HEK293 (cell line): ENCODE measurements at regions of chr22 and their contacts with region 1.

Region 1: GRCh38 chr22:21938071-21938822 is 14.4 kb downstream of the PPM1F start:
- H3K4me3 ChIP-seq: peak overlapping the region; percentile 51
- H3K27ac ChIP-seq: peak overlapping the region; percentile 42
- H3K4me1 ChIP-seq: no peaks in the 10 kb centered on the region
- CTCF ChIP-seq: peak; percentile 99

Region 2: DNA sequence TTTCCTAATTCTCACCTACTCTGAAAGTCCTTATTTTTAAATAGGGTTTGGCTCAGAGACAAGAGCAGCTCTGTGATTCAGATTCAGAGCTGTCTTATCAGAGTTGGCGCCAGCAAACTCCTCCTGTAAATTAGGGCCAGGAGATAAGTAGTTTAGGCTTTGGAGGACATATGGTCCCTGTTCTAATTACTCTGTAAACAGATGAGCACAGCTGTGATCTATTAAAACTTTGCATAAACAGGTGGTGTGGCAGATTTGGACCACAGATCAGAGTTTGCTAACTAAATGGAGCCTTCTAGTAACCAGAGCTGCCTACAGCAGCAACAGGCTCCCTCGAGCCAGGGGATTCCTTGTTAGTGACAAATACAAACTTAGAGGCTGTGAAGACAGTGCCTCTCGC is 230.6 kb before region 1 on chr22:
- CTCF ChIA-PET with region 1: interaction called, 28 read pairs
- POLR2A ChIA-PET with region 1: interaction called, 6 read pairs
- H3K4me3 ChIP-seq: no peak overlapping the region
- H3K27ac ChIP-seq: no peak overlapping the region
- H3K4me1 ChIP-seq: no peaks in the 10 kb centered on the region
- CTCF ChIP-seq: no peak

Region 3: DNA sequence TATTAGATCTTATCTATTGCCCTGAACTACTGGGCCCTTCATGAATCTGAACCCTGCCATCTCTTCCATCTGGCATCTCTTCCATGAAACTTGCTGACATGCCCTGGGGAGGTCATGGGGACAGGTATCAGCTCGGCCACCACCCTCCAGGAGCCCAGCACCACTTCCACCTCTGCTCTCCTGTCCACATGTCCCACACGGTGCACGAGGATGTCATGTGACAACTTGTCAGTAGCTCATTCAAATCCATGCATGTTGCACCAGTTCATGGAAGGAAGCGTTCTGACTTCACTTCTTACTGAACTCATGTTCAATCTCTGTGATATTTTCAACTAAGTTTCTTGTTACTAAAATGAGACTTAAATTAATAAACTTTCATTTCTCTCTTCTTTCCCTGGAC is 219.2 kb before region 1 on chr22:
- CTCF ChIA-PET with region 1: interaction called, 22 read pairs
- POLR2A ChIA-PET with region 1: no interaction called
- H3K4me3 ChIP-seq: no peak overlapping the region
- H3K27ac ChIP-seq: no peak overlapping the region
- H3K4me1 ChIP-seq: no peaks in the 10 kb centered on the region
- CTCF ChIP-seq: no peak

Region 4: GRCh38 chr22:21771631-21771976 is 166.6 kb before region 1 on chr22:
- CTCF ChIA-PET with region 1: interaction called, 10 read pairs
- POLR2A ChIA-PET with region 1: no interaction called
- H3K4me3 ChIP-seq: no peak overlapping the region
- H3K27ac ChIP-seq: no peak overlapping the region
- H3K4me1 ChIP-seq: no peaks in the 10 kb centered on the region
- CTCF ChIP-seq: no peak

Region 5: DNA sequence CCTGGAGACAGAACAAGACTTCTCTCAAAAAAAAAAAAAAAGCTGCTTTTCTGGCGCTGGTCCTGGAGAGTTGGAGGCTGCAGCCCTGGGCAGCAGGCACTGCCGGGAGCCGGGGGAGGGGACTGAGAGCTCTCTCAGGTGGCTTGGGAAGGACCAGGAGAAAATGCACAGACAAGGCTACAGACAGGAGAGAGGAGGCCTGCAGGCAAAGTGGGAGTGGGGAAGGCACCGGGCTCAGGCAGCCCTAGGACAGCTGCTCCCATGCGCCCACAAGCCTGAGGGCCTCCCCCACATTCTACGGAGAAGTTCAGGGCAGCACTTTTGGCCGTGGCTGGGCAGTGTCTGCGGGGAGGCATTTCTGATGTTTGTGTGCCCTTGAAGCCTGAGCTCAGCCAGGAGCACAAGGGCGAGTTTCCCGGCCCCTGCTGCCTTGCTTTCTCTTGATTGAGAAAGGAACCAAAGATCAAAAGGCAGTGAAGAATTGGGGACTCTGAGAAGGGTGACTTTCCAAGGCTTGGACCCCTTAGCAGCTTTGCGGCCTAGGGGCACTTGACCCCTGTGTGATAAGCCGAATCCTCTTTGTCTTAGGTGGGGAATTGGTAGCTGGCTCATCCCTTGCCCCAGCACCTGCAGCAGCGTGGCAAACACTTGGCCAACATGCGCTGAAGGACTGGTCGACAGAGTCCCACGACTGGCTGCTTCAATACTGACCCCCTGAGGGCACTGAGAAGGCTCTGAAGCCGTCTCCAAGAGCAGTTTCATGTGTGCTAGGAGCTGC is 20.9 kb before region 1 on chr22:
- CTCF ChIA-PET with region 1: interaction called, 10 read pairs
- POLR2A ChIA-PET with region 1: no interaction called
- H3K4me3 ChIP-seq: no peak overlapping the region
- H3K27ac ChIP-seq: no peak overlapping the region
- H3K4me1 ChIP-seq: no peaks in the 10 kb centered on the region
- CTCF ChIP-seq: peak; percentile 30; the same call in 1 of the 2 replicates

Region 6: DNA sequence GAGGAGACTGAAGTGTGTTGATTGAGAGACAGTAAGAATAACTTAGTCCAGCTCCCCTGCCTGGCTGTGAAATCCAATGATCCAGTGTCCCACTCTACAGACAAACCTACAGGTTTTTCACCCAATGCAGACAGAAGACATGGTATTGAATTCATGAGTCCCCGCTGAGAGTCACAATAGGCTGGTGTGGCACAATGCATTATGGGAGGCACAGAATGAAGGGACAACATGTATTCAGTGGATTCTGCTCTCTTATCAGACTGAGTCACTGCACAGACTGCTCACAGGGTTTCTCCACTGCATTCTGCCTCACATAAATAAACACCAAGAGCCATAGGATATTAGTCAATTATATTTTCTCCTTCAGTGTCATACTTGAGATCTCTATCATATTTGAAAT is 99.5 kb after region 1 on chr22:
- CTCF ChIA-PET with region 1: no interaction called
- POLR2A ChIA-PET with region 1: no interaction called
- H3K4me3 ChIP-seq: no peak overlapping the region
- H3K27ac ChIP-seq: no peak overlapping the region
- H3K4me1 ChIP-seq: no peaks in the 10 kb centered on the region
- CTCF ChIP-seq: no peak

Region 7: GRCh38 chr22:22161924-22162851 is 223.9 kb after region 1 on chr22:
- CTCF ChIA-PET with region 1: no interaction called
- POLR2A ChIA-PET with region 1: no interaction called
- H3K4me3 ChIP-seq: no peak overlapping the region
- H3K27ac ChIP-seq: no peak overlapping the region
- H3K4me1 ChIP-seq: no peaks in the 10 kb centered on the region
- CTCF ChIP-seq: no peak

Region 8: GRCh38 chr22:22397277-22397870 is 459.1 kb after region 1 on chr22:
- CTCF ChIA-PET with region 1: no interaction called
- POLR2A ChIA-PET with region 1: no interaction called
- H3K4me3 ChIP-seq: no peak overlapping the region
- H3K27ac ChIP-seq: no peak overlapping the region
- H3K4me1 ChIP-seq: no peaks in the 10 kb centered on the region
- CTCF ChIP-seq: no peak

Region 9: GRCh38 chr22:22558972-22559603 is 620.8 kb after region 1 on chr22 and contains the start of gene PRAME:
- CTCF ChIA-PET with region 1: no interaction called
- POLR2A ChIA-PET with region 1: no interaction called
- H3K4me3 ChIP-seq: no peak within 1 kb of the TSS
- H3K27ac ChIP-seq: no peak within 1 kb of the TSS
- H3K4me1 ChIP-seq: no peaks in the 10 kb centered on the region
- CTCF ChIP-seq: peak; percentile 92